Activated T-helper 1 cell treated with anti-CD3 and anti-CD28 coated beads, Interleukin-12 subunit alpha, Interleukin-12 subunit beta, Interleukin-2, Interleukin-4 antibody, amounts not matched to agents 30 ng/mL and 10 ng/mL and 1 ng/mL, durations not matched to agents 14 hours and 24 hours and 36 hours (primary cell): ENCODE measurements at regions of chr3 and their contacts with region 1.

Region 1: GRCh38 chr3:88203642-88204055 is 53.9 kb downstream of the C3orf38 start:
- DNase-seq: no peak
- H3K4me3 Mint-ChIP-seq: no peak overlapping the region
- H3K27ac Mint-ChIP-seq: no peak overlapping the region
- H3K4me1 Mint-ChIP-seq: no peaks in the 10 kb centered on the region
- H3K27me3 Mint-ChIP-seq: peaks cover 4% of the 10 kb centered on the region

Region 2: DNA sequence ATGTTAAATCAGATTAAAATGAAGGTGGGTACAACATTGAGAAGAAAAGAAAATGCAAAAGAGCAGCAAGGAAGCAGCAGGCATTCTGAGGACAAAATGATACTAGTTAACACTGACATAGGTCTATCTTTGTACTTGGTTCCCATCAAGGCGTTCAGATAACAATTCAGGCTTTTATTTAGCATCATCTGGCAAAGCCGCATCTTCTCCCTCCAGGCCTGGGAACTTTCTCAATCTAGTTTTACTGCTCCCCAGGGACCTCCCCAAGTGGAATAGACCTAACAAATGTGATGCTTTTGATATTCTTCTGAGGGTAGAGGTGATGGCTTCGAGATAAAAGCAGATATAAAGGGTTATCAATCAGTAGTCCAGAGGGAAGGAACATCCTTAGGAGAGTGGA is 76.7 kb after region 1 on chr3:
- intact Hi-C with region 1: no loop called
- DNase-seq: no peak
- H3K4me3 Mint-ChIP-seq: no peak overlapping the region
- H3K27ac Mint-ChIP-seq: no peak overlapping the region
- H3K4me1 Mint-ChIP-seq: no peaks in the 10 kb centered on the region
- H3K27me3 Mint-ChIP-seq: no peaks in the 10 kb centered on the region

Region 3: DNA sequence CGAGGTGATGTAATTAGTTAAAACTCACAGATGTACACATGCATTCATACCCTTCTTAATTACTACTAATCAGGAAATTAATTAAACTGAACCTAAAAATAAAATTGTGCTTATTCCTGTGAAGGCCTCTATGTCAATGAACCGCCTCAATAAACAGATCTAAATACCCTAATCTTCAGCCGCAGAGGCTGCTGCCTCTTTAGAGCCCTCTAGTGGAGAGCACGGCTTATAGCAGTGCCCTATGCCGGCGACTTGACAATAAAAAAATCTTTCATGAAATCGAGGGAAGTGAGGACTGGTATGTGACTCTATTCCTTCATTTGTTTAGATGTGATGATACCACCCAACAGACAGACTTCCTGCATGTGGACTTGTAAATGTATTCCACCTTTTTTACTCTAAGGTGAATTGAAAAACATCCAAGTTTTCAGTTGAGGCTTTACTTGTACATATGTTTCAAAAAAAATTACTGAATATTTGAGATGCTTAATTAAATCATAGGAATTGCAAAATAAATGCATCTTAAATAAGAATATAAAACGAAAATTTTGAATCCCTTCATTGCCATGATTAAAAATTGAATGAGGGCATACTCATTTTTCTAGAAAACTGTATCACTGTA is 895.4 kb after region 1 on chr3:
- intact Hi-C with region 1: loop called (anchors 1 kb)
- DNase-seq: peak; percentile 9
- H3K4me3 Mint-ChIP-seq: no peak overlapping the region
- H3K27ac Mint-ChIP-seq: no peak overlapping the region
- H3K4me1 Mint-ChIP-seq: no peaks in the 10 kb centered on the region
- H3K27me3 Mint-ChIP-seq: no peaks in the 10 kb centered on the region

Region 4: DNA sequence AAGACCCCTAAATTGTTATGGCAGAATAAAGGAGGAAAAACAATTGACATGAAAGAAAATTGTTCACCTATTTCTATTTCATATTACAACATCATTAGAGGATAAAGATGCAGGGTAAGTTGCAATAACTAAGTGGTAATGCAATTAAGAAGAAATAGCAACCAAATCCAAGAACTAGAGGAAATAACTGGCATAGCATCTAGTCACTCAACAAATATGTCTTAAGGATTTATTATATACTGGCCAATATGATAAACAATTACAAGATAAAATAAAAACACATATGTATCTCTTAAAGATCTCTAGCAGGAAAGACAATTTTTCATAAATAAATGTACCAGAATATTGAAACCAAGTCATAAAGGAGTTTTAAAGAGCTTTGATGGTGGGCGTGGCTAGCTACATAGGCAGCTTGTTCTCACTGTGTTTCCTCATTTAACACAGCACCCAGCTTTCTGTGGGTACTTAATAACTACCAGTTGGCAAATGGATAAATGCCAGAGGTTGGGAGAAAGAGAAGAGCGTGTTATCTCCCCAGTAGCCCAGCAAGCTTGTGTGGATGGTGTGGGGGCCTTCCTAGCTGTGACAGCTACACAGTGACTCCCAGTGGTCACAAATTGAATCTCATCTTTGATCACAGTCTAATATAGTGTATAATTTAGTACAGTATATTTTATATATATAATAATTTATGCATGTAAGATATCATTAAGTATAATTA is 1887.7 kb after region 1 on chr3:
- intact Hi-C with region 1: loop called (anchors 5 kb)
- DNase-seq: no peak
- H3K4me3 Mint-ChIP-seq: no peak overlapping the region
- H3K27ac Mint-ChIP-seq: no peak overlapping the region
- H3K4me1 Mint-ChIP-seq: no peaks in the 10 kb centered on the region
- H3K27me3 Mint-ChIP-seq: no peaks in the 10 kb centered on the region